Right cardiac atrium (tissue), 5 donors: ENCODE measurements at regions of chr2 and their contacts with region 1.

Region 1: DNA sequence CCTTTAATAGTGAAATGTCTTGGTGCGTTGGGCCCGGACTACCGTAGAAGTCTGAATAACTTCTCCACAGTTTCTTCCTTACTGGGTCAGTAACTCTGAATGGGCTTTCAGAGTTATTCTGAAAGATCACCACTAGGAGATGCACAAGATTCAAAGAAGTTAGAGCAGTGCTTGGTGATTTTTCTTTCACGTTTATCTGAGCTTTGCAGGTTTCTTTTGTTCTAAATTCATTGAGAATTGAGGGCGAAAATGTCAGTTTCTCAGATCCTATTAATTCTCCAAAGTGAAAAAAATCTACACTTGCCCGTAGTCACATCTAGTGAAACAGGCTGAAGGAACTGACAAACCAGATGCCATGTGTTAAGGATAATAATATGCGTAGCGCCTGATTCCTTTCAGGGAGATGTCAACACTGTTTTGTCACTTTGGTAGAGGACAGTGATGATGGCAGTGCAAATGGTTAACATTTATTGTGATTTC is 70.1 kb downstream of the QPCT start:
- DNase-seq: no peak
- ATAC-seq: peak; percentile 75 to 85
- H3K4me3 ChIP-seq: no peak overlapping the region
- H3K27ac ChIP-seq: no peak overlapping the region
- H3K4me1 ChIP-seq: peaks cover 2% of the 10 kb centered on the region
- H3K27me3 ChIP-seq: no peaks in the 10 kb centered on the region

Region 2: GRCh38 chr2:36982467-36982866 is 432.0 kb before region 1 on chr2:
- intact Hi-C with region 1: no loop called
- DNase-seq: no peak
- ATAC-seq: no peak
- H3K4me3 ChIP-seq: no peak overlapping the region
- H3K27ac ChIP-seq: no peak overlapping the region
- H3K4me1 ChIP-seq: no peaks in the 10 kb centered on the region
- H3K27me3 ChIP-seq: no peaks in the 10 kb centered on the region

Region 3: GRCh38 chr2:37529830-37530415 is 115.4 kb after region 1 on chr2:
- intact Hi-C with region 1: loop called in 1 of 4 experiments (anchors 10 kb)
- DNase-seq: no peak
- ATAC-seq: no peak
- H3K4me3 ChIP-seq: no peak overlapping the region
- H3K27ac ChIP-seq: no peak overlapping the region
- H3K4me1 ChIP-seq: no peaks in the 10 kb centered on the region
- H3K27me3 ChIP-seq: no peaks in the 10 kb centered on the region

Region 4: GRCh38 chr2:37653805-37654378 is 239.4 kb after region 1 on chr2:
- intact Hi-C with region 1: loop called in 1 of 4 experiments (anchors 10 kb)
- DNase-seq: peak; percentile 34 to 76 (median 73)
- ATAC-seq: peak; percentile 68 to 77
- H3K4me3 ChIP-seq: no peak overlapping the region
- H3K27ac ChIP-seq: peak overlapping the region; percentile 94
- H3K4me1 ChIP-seq: peaks cover 40% of the 10 kb centered on the region
- H3K27me3 ChIP-seq: no peaks in the 10 kb centered on the region